Activated CD4-positive, alpha-beta T cell treated with anti-CD3 and anti-CD28 coated beads, Interleukin-2, amount 10 ng/mL, durations not matched to agents 24 days and 14 days (primary cell): ENCODE measurements at regions of chr1 and their contacts with region 1.

Region 1: GRCh38 chr1:245156081-245156735 is 1.4 kb downstream of the KIF26B start:
- DNase-seq: peak; percentile 95
- H3K4me3 Mint-ChIP-seq: peak overlapping the region; percentile 84
- H3K27ac Mint-ChIP-seq: no peak overlapping the region
- H3K4me1 Mint-ChIP-seq: peaks cover 13% of the 10 kb centered on the region
- H3K27me3 Mint-ChIP-seq: peaks cover 65% of the 10 kb centered on the region

Region 2: GRCh38 chr1:244652699-244653466 is 503.3 kb before region 1 on chr1 and contains the start of gene DESI2:
- intact Hi-C with region 1: loop called (anchors 5 kb)
- DNase-seq: peak; percentile 99
- H3K4me3 Mint-ChIP-seq: peak within 1 kb of the TSS; percentile 82
- H3K27ac Mint-ChIP-seq: peak within 1 kb of the TSS; percentile 84
- H3K4me1 Mint-ChIP-seq: peaks cover 23% of the 10 kb centered on the region
- H3K27me3 Mint-ChIP-seq: no peaks in the 10 kb centered on the region
- total RNA-seq, gene DESI2: 32.3 and 33.1 TPM in 2 replicates

Region 3: DNA sequence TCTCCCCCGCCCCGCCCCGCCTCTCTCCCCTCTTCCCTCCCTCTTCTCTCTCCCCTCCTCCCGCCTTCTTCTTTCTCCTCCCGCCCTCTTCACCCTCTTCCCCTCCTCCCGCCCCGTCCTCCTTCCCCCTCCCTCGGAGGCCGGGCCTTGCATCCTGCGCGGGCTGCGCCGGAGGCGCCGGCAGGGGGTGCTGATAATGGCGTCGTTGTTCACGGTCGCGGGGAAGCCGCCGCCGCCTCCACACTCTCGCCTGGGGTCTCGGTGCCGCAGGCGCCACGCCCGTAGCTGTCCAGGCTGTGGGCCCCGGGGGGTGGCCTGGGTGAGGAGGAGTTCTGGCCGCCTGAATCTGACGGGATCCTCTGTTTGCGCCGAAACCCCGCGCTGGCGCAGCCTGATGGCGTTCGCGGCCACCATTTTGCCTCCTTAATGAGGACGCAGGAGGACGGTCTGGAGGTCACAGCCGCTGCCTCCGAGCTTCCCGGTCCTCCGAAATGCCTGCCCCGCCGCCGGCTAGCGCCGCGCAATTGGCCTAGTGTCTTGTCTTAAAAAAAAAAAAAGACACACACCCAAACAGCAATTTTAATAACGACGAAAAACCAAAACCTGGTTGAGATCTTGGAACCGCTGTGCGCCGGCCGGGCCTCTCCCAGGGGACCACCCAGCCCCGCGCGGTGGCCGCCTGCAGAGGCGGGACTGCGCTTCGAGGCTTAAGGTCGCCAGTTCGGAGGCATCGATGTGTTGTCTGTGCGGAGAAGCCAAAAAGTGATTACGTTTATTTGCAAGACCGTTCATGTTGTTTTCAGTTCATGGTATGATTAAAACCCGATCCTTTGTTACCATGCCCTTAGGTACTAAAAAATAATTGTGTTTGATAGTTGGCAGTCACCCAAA is 185.3 kb before region 1 on chr1:
- intact Hi-C with region 1: loop called (anchors 5 kb)
- DNase-seq: peak; percentile 97
- H3K4me3 Mint-ChIP-seq: peak overlapping the region; percentile 94
- H3K27ac Mint-ChIP-seq: peak overlapping the region; percentile 99
- H3K4me1 Mint-ChIP-seq: peaks cover 17% of the 10 kb centered on the region
- H3K27me3 Mint-ChIP-seq: peaks cover 3% of the 10 kb centered on the region

Region 4: GRCh38 chr1:245121513-245121912 is 34.7 kb before region 1 on chr1:
- intact Hi-C with region 1: no loop called
- DNase-seq: no peak
- H3K4me3 Mint-ChIP-seq: no peak overlapping the region
- H3K27ac Mint-ChIP-seq: no peak overlapping the region
- H3K4me1 Mint-ChIP-seq: no peaks in the 10 kb centered on the region
- H3K27me3 Mint-ChIP-seq: no peaks in the 10 kb centered on the region

Region 5: GRCh38 chr1:245166471-245166885 is 10.3 kb after region 1 on chr1:
- intact Hi-C with region 1: no loop called
- DNase-seq: no peak
- H3K4me3 Mint-ChIP-seq: no peak overlapping the region
- H3K27ac Mint-ChIP-seq: no peak overlapping the region
- H3K4me1 Mint-ChIP-seq: peaks cover 4% of the 10 kb centered on the region
- H3K27me3 Mint-ChIP-seq: peaks cover 37% of the 10 kb centered on the region

Region 6: GRCh38 chr1:246117066-246117791 is 961.0 kb after region 1 on chr1:
- intact Hi-C with region 1: loop called (anchors 5 kb)
- DNase-seq: peak; percentile 74
- H3K4me3 Mint-ChIP-seq: peak overlapping the region; percentile 65
- H3K27ac Mint-ChIP-seq: peak overlapping the region; percentile 62
- H3K4me1 Mint-ChIP-seq: peaks cover 9% of the 10 kb centered on the region
- H3K27me3 Mint-ChIP-seq: no peaks in the 10 kb centered on the region

Region 7: GRCh38 chr1:246497331-246497915 is 1341.2 kb after region 1 on chr1:
- intact Hi-C with region 1: loop called (anchors 5 kb)
- DNase-seq: peak; percentile 81
- H3K4me3 Mint-ChIP-seq: no peak overlapping the region
- H3K27ac Mint-ChIP-seq: peak overlapping the region; percentile 46
- H3K4me1 Mint-ChIP-seq: peaks cover 7% of the 10 kb centered on the region
- H3K27me3 Mint-ChIP-seq: no peaks in the 10 kb centered on the region

Region 8: GRCh38 chr1:246753670-246754535 is 1597.7 kb after region 1 on chr1:
- intact Hi-C with region 1: loop called (anchors 5 kb)
- DNase-seq: peak; percentile 87
- H3K4me3 Mint-ChIP-seq: no peak overlapping the region
- H3K27ac Mint-ChIP-seq: no peak overlapping the region
- H3K4me1 Mint-ChIP-seq: no peaks in the 10 kb centered on the region
- H3K27me3 Mint-ChIP-seq: no peaks in the 10 kb centered on the region